ENCODE measurements at regions of chr19 and their contacts with region 1.

Region 1: GRCh38 chr19:35135389-35135909 is 590 bp upstream of the LGI4 start:
- DNase-seq: peak; percentile 82 to 89
- H3K4me3 ChIP-seq: no peak overlapping the region
- H3K4me3 Mint-ChIP-seq: no peak overlapping the region
- H3K27ac Mint-ChIP-seq: no peak overlapping the region
- H3K4me1 ChIP-seq: peaks cover 11% of the 10 kb centered on the region; the same call in 1 of the 2 replicates
- H3K4me1 Mint-ChIP-seq: peaks cover 7% of the 10 kb centered on the region
- H3K27me3 ChIP-seq: no peaks in the 10 kb centered on the region
- H3K27me3 Mint-ChIP-seq: peaks cover 2% of the 10 kb centered on the region
- CTCF ChIP-seq: peak; percentile 94 to 96

Region 2: DNA sequence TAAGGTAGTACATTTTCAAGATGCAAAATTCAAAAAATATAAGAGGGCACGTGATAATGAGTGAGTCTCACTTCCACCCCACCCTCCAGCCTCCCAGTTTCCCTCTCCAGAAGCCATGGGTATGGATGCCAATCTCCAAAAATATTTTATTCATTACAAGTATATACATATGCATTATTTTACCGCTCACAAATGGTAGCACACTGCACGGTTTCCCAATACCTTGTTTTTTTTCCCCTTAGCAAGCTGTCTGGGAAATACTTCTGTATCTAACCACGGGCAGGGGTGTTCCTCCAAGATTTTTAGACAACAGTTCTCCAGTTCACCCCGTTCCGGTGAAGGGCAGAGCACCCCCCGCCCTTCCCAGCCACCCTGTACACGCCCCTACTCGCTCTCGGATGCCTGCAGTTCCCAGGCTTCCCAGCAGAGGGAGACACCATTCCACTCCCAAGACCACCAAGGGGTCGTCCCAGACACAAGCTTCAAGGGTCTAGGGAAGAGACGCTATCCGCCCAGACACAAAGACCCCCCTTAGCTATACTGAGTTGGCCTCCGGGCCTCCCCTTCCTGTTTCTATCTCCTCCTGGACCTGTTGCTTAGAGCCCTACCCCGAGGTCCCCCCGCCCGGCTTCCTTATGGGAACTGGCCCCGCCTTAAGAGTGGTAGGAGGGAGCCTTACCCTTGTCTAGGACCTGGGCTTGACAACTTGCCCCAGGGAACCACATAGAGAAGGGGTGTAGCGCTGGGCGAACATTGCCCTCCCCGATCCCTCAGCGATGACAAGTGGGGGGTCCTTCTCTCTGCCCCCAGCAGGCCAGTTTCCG is 20.9 kb before region 1 on chr19:
- CTCF ChIA-PET with region 1: interaction called, 6 read pairs
- POLR2A ChIA-PET with region 1: no interaction called
- intact Hi-C with region 1: loop called (anchors 1 kb)
- DNase-seq: peak; percentile 70 to 78
- H3K4me3 ChIP-seq: peak overlapping the region; percentile 45
- H3K4me3 Mint-ChIP-seq: peak overlapping the region; percentile 58
- H3K27ac Mint-ChIP-seq: no peak overlapping the region
- H3K4me1 ChIP-seq: peaks cover 31% of the 10 kb centered on the region
- H3K4me1 Mint-ChIP-seq: peaks cover 25% of the 10 kb centered on the region
- H3K27me3 ChIP-seq: no peaks in the 10 kb centered on the region
- H3K27me3 Mint-ChIP-seq: no peaks in the 10 kb centered on the region
- CTCF ChIP-seq: peak; percentile 96 to 97

Region 3: DNA sequence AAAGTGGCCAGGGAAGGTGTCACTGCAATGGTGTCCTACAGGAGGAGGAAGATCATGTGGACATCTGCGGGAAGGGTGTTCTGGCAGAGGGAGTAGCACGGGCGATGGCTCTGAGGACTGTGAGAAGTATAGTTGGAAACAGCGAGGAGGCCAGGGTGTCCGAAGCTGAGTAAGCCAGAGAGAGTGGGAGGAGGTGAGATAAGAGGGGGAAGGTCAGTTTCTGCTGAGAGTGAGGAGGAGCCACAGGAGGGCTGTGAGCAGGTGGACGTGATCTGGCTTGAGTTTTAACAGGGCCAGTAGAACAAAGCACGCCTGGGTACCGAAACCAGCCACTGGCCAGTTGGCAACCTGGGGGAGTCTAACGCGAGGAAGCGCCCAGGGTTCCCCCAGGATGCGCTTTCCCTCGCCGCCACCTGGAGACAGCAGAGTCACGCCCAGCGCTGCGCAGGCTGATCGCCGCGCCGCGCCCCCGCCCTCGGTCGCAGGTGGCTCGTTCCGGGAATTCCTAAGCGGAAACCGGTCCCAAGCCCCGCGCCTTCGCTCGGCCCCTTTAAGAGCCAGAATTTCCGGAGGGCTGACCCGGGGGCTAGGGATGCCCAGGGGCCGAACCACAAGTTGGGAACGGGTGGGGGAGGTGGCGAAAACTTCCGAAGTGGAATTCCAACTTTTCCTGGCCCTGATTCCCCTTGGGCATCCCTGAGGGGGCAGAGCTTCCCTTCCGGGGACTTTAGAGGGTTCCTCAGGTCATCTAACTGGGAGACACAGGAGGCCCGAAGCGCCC is 112.3 kb after region 1 on chr19:
- CTCF ChIA-PET with region 1: no interaction called
- POLR2A ChIA-PET with region 1: no interaction called
- intact Hi-C with region 1: loop called (anchors 5 kb)
- DNase-seq: peak; percentile 97
- H3K4me3 ChIP-seq: peak overlapping the region; percentile 91
- H3K4me3 Mint-ChIP-seq: peak overlapping the region; percentile 86
- H3K27ac Mint-ChIP-seq: peak overlapping the region; percentile 94
- H3K4me1 ChIP-seq: peaks cover 11% of the 10 kb centered on the region
- H3K4me1 Mint-ChIP-seq: peaks cover 21% of the 10 kb centered on the region
- H3K27me3 ChIP-seq: no peaks in the 10 kb centered on the region
- H3K27me3 Mint-ChIP-seq: no peaks in the 10 kb centered on the region
- CTCF ChIP-seq: peak in 1 of 2 experiments; percentile 90

Region 4: DNA sequence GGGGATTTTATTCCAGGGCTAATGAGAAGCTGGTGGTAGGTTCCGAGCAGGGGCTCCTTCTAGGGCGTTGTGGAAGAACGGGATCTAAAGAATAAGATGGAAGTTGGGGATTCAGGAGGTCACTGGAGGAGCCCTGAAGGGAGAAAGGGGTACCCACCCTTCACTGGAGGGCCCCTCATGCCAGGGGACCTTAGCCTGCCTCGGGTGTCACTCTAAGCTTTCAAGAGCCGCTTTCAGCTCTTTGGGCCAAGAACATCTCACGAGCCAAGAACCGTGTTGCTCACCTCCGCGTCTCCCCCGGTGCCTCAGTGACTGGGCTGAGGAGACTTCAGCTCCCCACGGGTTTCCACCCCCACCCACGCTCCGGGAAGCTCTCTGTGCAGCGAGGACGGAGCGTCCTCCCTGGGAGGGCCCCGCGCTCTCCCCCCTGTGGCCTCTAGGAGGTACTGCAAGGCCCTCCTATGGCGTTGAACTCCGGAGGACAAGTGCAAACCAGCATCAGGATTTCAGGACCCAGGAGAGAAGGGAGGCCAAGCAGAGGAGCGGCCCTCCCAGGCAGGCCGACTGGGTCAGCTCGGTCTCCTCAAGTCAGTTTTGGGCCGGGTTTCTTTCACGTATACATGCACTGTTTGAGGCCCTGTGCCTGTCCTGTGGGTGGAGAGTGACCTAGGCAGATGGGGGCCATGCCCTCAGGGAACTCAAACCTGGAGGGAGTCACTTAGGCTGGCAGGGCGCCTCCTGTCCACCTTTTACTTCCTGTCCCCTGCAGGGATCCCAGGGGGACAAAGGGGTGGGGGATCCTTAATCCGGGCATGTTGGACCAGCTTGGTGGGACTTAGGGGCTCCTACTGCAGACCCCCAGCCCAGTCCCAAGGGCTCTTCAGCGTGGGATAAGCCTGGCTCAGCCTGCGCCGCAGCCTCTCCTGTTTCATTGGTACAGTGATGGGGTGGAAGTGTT is 359.9 kb after region 1 on chr19:
- CTCF ChIA-PET with region 1: no interaction called
- POLR2A ChIA-PET with region 1: no interaction called
- intact Hi-C with region 1: no loop called
- DNase-seq: peak; percentile 72 to 78
- H3K4me3 ChIP-seq: 0 out of 2 replicates have a peak overlapping the region, but pooled peaks have one; percentile 4
- H3K4me3 Mint-ChIP-seq: peak overlapping the region; percentile 39
- H3K27ac Mint-ChIP-seq: peak overlapping the region; percentile 16
- H3K4me1 ChIP-seq: peaks cover 8% of the 10 kb centered on the region
- H3K4me1 Mint-ChIP-seq: no peaks in the 10 kb centered on the region
- H3K27me3 ChIP-seq: no peaks in the 10 kb centered on the region
- H3K27me3 Mint-ChIP-seq: no peaks in the 10 kb centered on the region
- CTCF ChIP-seq: peak; percentile 96 to 98

Measured in Caco-2 (cell line).